BJ (cell line): ENCODE measurements at regions of chr6 and their contacts with region 1.

Region 1: DNA sequence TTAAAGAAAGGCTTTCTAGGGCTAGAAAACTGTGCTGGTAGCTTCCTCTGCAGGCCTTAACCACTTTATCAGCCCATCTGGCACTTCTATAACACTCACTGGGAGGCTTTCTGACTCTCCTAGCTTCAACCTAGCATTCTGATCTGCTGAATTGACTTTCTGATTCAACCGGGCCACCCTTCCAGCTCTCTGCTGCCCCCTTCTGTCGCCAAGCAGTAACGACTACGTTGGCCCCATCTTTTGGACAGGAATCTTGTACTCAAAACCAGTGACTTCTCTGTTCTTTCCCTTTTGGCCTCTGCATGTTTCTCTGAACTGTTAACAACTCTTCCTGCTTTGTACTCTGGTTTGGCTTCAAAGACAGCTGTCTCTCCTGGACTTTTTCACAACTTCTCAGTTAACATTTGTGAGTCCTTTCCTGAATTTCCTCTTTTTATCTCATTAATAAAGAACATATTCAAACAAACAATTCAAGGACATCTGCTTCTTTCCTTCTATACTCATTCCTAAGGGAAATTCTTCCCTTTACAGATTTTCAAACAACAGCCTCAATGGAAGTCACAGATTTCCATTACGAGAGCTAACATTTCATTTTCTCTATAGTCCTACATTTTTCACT is 43.9 kb upstream of the FAM135A start:
- DNase-seq: peak; percentile 8
- H3K4me3 ChIP-seq: no peak overlapping the region
- H3K27me3 ChIP-seq: peaks cover 7% of the 10 kb centered on the region
- CTCF ChIP-seq: peak; percentile 97

Region 2: GRCh38 chr6:70221025-70221714 is 148.3 kb before region 1 on chr6:
- CTCF ChIA-PET with region 1: interaction called, 16 read pairs
- POLR2A ChIA-PET with region 1: no interaction called
- DNase-seq: no peak
- H3K4me3 ChIP-seq: no peak overlapping the region
- H3K27me3 ChIP-seq: no peaks in the 10 kb centered on the region
- CTCF ChIP-seq: peak; percentile 63

Region 3: DNA sequence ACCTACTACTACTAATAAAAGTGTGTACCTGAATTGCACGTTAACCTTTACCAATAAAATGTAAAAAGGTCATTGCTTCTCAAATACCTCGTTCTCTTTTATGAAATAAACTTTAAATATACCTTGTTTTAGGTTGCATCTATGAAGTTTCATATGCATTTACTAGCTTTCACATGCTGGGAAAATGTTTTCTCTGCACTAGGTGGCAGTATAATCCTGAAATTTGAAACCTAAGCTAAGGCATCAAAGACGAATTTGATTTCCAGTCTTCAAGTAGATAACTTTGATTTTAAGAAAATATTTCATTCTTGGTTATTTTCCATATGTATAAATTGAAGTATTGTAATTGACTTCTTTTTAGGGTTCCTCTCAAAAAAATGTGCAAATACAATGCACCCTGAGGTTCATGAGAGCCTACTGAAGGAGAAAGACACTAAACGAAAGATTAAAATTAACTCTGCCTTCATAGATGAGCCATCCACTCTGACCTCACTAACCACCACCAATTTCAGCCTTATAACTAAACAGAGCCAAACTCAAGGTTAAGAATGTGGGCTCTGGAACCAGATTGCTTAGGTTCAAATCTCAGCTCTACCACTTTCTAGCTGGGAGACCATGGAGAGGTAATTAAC is 59.3 kb before region 1 on chr6:
- CTCF ChIA-PET with region 1: interaction called, 72 read pairs
- POLR2A ChIA-PET with region 1: no interaction called
- DNase-seq: peak; percentile 2
- H3K4me3 ChIP-seq: no peak overlapping the region
- H3K27me3 ChIP-seq: peaks cover 11% of the 10 kb centered on the region
- CTCF ChIP-seq: peak; percentile 65

Region 4: DNA sequence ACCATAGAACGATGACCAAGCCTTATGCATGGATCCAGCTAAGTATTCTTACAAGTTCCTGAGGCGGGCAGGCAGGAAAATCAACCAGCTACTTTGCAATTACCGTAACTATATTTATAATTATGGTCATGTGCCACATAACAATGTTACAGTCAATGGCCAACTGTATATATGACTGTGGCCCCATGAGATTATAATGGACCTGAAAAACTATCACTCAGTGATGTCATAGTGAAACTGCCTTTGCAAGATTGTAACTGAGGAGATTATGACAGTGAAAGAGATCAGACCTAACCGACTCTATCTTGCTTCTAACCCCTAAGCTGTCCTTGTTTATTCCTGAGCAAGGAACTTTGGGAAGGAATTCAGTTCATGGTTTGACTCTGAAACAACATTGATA is 10.8 kb after region 1 on chr6:
- CTCF ChIA-PET with region 1: interaction called, 38 read pairs
- POLR2A ChIA-PET with region 1: no interaction called
- DNase-seq: no peak
- H3K4me3 ChIP-seq: no peak overlapping the region
- H3K27me3 ChIP-seq: no peaks in the 10 kb centered on the region
- CTCF ChIP-seq: no peak

Region 5: GRCh38 chr6:71886184-71887005 is 1517.0 kb after region 1 on chr6 and contains the start of gene RIMS1:
- CTCF ChIA-PET with region 1: no interaction called
- POLR2A ChIA-PET with region 1: interaction called, 14 read pairs
- DNase-seq: no peak
- H3K4me3 ChIP-seq: peak within 1 kb of the TSS; percentile 52
- H3K27me3 ChIP-seq: peaks cover 18% of the 10 kb centered on the region
- CTCF ChIP-seq: peak; percentile 58
- polyA plus RNA-seq, gene RIMS1: 0.28 and 0.29 TPM in 2 replicates